ENCODE measurements at regions of chr6 and their contacts with region 1.

Region 1: DNA sequence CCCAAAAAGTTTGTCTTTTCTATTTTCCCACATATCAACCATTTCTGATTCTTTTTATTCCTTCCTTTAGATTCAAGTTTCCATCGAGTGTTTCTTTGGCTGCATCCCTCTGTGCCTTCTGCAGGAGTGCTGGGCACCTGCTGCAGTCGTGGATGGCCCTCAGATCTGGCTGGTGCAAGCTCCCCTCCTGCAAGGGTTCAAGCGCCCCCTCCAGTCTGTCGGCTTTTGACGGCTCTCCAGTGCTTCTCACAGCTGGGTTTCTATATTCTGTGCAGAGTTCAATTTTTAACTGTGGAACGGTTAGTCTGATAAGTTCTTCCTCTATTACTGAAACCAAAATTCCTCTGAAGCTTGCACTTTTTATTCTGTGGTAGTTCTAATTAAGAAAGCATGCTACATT is 132.1 kb downstream of the HUS1B start:
- DNase-seq: peak in 1 of 10 donors; percentile 53
- H3K4me3 ChIP-seq: no peak overlapping the region
- H3K27ac ChIP-seq: peak overlapping the region in 1 of 59 donors; percentile 32
- H3K27me3 ChIP-seq: no peaks in the 10 kb centered on the region
- CTCF ChIP-seq: peak in 35 of 56 donors; percentile 10 to 62 (median 32)

Region 2: GRCh38 chr6:389622-390021 is 135.2 kb before region 1 on chr6:
- intact Hi-C with region 1: loop called in 1 of 2 experiments (anchors 10 kb)
- DNase-seq: no peak
- H3K4me3 ChIP-seq: no peak overlapping the region
- H3K27ac ChIP-seq: no peak overlapping the region
- H3K27me3 ChIP-seq: peaks cover 5 to 99% (median 77%) of the 10 kb centered on the region in 45 donors
- CTCF ChIP-seq: peak in 10 of 56 donors; percentile 8 to 41 (median 20)

Region 3: GRCh38 chr6:579339-579738 is 54.5 kb after region 1 on chr6:
- intact Hi-C with region 1: no loop called
- DNase-seq: no peak
- H3K4me3 ChIP-seq: no peak overlapping the region
- H3K27ac ChIP-seq: no peak overlapping the region
- H3K27me3 ChIP-seq: no peaks in the 10 kb centered on the region
- CTCF ChIP-seq: peak in 3 of 56 donors; percentile 7 to 13 (median 8)

Region 4: DNA sequence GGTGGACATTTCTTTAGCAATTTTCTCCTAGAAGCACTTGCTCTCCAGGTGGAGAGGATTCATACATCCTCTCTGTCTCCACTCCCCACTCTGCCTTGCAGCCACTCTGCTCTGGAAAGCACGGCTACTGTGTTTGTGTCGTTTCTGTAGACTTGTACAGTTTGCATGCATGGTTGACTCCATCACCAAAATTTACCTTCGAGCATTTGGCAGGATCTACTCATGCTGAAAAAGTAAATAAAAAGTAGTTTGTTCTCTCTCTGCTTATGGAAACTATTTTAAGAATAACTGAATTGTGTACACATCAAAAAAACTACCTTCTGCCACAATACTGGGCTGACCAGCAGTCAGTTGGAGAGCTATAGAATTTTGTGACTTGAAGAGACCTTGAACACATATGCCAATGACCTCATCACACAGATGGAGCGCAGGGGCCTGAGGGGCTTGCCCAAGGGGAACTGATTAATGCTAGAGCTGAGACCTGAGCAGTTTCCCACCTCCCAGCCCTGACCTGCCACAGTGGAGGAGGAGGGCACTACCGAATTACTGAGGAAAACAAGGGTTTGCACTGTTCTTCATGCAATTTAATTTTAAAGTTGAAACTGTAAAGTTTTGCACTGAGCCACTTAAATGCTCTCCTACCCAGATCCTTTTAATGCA is 753.4 kb after region 1 on chr6:
- intact Hi-C with region 1: no loop called
- DNase-seq: no peak
- H3K4me3 ChIP-seq: no peak overlapping the region
- H3K27ac ChIP-seq: no peak overlapping the region
- H3K27me3 ChIP-seq: peaks cover 0 to 13% (median 0%) of the 10 kb centered on the region in 45 donors
- CTCF ChIP-seq: no peak

Measured in dorsolateral prefrontal cortex (tissue), 120 donors.